ENCODE measurements at regions of chr3 and their contacts with region 1.

Region 1: DNA sequence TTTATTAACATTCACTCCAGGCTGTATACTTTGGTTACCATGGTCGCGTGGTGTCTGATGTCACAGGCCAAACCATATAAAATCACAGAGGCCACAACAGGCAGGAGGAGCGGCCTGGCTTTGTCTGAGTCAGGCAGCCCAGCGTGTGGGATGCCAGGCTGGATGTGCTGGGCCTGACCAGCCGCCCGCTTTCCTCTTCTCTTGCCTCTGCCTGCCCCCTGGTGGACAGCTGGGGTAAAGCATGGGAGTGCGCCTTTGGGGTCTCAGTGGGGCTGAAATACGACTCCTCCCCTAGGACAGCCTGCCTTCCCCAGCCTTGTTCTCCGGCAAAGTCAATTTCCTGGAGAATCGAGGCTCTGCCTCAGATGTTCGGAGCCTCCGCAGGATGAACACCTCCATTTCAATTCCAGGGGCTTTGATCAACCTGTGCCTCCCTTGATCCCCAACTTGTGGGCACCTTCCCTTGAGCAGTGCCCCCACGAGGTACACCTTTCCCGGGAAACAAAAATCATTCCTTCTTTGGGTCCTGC is 78.2 kb downstream of the CCNL1 start:
- DNase-seq: peak; percentile 98
- ATAC-seq: peak; percentile 94
- H3K4me3 ChIP-seq: peak overlapping the region; percentile 38; the same call in 1 of the 2 replicates
- H3K27ac ChIP-seq: peak overlapping the region; percentile 97
- H3K4me1 ChIP-seq: peaks cover 36% of the 10 kb centered on the region
- H3K27me3 ChIP-seq: no peaks in the 10 kb centered on the region
- CTCF ChIP-seq: peak; percentile 99

Region 2: GRCh38 chr3:156554842-156555687 is 526.7 kb before region 1 on chr3 and contains the start of gene SSR3:
- CTCF ChIA-PET with region 1: no interaction called
- POLR2A ChIA-PET with region 1: interaction called, 3 read pairs
- intact Hi-C with region 1: loop called (anchors 2 kb)
- DNase-seq: peak; percentile 99
- ATAC-seq: peak; percentile 99
- H3K4me3 ChIP-seq: peak within 1 kb of the TSS; percentile 96
- H3K27ac ChIP-seq: peak within 1 kb of the TSS; percentile 54
- H3K4me1 ChIP-seq: peaks cover 36% of the 10 kb centered on the region
- H3K27me3 ChIP-seq: no peaks in the 10 kb centered on the region
- CTCF ChIP-seq: no peak
- total RNA-seq, gene SSR3: 171 and 178 TPM in 2 replicates

Region 3: DNA sequence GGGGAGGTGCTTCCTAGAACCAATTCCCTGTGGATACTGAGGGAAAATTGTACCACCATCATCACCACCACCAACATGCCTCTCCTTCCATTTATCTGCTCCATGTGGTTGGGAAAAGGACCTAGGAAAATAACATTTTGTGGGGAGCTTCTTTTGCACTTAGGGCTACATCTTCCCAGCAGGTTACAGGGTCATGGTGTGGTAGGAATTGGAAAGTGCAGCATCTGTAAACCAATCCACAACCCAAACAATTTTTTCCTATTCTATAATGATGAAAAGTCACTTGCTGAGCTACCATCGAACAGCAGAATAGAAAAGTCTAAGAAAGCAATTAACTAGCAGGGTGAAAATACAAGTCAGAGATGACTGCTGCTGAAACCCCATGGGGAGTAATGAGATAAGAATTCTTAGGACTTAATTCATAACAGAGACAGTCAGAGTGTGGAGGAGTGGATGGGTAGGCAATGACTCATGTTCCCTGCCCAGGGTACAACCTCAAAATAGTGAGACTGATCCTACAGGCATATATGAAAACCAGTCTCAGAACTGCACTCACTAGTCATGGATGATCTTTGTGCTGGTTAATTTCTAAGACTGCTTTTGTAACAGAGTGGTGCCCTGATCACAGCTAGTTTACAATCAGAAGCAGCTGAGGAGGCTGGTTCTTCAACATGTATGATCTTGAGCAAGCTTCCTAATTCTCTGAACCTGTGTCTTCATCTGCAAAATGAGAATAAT is 293.7 kb before region 1 on chr3:
- CTCF ChIA-PET with region 1: no interaction called
- POLR2A ChIA-PET with region 1: no interaction called
- intact Hi-C with region 1: loop called (anchors 1 kb)
- DNase-seq: peak; percentile 94
- ATAC-seq: peak; percentile 73
- H3K4me3 ChIP-seq: peak overlapping the region; percentile 28; the same call in 1 of the 2 replicates
- H3K27ac ChIP-seq: peak overlapping the region; percentile 91
- H3K4me1 ChIP-seq: peaks cover 59% of the 10 kb centered on the region
- H3K27me3 ChIP-seq: no peaks in the 10 kb centered on the region
- CTCF ChIP-seq: no peak

Region 4: GRCh38 chr3:156892701-156893100 is 189.0 kb before region 1 on chr3:
- CTCF ChIA-PET with region 1: no interaction called
- POLR2A ChIA-PET with region 1: no interaction called
- intact Hi-C with region 1: loop called (anchors 2 kb)
- DNase-seq: peak; percentile 97
- ATAC-seq: peak; percentile 94
- H3K4me3 ChIP-seq: no peak overlapping the region
- H3K27ac ChIP-seq: peak overlapping the region; percentile 88
- H3K4me1 ChIP-seq: peaks cover 22% of the 10 kb centered on the region
- H3K27me3 ChIP-seq: no peaks in the 10 kb centered on the region
- CTCF ChIP-seq: no peak

Region 5: DNA sequence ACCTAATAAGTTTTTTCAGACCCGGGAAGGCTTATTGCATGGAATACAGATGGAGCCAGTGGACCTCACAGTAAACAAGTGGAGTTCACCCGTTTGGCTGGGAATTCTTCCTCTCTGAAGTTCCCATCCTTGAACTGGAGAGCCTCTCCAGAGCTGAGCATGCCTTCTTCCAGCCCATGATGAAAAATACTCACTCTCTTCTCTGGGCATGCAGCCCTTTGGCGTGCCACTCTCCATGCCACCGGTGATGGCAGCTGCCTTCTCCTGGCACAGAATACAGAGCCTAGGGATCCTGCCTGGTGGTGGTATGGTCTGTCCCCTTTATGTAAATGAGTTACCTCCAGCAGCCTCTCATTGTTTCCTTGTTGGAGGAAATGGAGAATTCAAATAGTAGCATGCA is 104.8 kb before region 1 on chr3:
- CTCF ChIA-PET with region 1: no interaction called
- POLR2A ChIA-PET with region 1: no interaction called
- intact Hi-C with region 1: no loop called
- DNase-seq: no peak
- ATAC-seq: no peak
- H3K4me3 ChIP-seq: no peak overlapping the region
- H3K27ac ChIP-seq: no peak overlapping the region
- H3K4me1 ChIP-seq: no peaks in the 10 kb centered on the region
- H3K27me3 ChIP-seq: no peaks in the 10 kb centered on the region
- CTCF ChIP-seq: no peak

Region 6: GRCh38 chr3:157130467-157131251 is 48.9 kb after region 1 on chr3:
- CTCF ChIA-PET with region 1: interaction called, 4 read pairs
- POLR2A ChIA-PET with region 1: interaction called, 5 read pairs
- intact Hi-C with region 1: loop called (anchors 1 kb)
- DNase-seq: peak; percentile 95
- ATAC-seq: peak; percentile 49
- H3K4me3 ChIP-seq: peak overlapping the region; percentile 33; the same call in 1 of the 2 replicates
- H3K27ac ChIP-seq: peak overlapping the region; percentile 99
- H3K4me1 ChIP-seq: peaks cover 98% of the 10 kb centered on the region
- H3K27me3 ChIP-seq: no peaks in the 10 kb centered on the region
- CTCF ChIP-seq: peak; percentile 76